ENCODE measurements at regions of chr15 and their contacts with region 1.

Region 1: GRCh38 chr15:71448688-71449114 is 333.4 kb downstream of the THSD4 start:
- DNase-seq: peak in 1 of 2 donors; percentile 10
- ATAC-seq: peak; percentile 33

Region 2: DNA sequence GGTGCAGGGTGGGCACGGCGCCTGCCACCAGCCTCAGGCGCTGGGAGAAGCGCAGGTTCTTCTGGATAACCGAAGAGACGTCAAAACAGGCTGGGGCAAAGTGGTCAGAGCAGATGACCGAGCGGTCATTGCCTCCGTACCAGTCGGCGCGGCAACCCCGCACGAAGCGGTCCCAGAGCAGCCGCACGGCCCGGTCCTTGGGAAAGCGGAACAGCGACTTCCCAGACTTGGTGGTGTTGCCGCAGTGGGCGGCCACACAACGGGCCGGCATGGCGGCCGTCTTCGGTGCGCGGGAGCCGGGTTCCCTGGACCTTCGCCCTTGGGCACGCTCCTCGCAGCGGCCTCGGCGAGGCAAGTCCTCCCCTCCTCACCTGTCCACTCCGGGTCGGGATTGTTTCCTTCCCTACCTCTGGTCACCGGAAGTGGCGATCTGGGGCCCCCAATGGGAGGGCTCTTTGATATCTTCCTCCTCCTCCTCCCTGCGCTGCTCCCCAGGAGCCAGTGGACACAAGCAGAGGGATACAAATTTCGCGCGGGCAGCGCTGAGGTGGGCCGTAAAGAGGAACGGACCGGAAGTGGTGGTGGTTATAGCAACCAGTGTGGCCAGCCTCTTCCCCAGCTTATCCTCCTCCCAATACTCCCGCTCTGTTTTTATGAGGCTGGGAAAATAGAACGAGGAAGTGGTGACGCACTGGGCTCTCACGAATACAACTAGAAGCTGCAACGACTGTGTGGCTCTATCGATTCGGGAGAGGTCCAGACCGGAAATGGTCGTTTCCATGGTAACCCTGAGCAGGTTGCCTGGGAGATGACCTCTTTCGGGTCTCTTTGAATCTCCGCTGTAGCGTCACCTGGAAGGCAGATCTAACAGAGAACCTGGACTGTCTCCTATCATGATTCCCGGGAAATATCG is 556.4 kb before region 1 on chr15 and contains the starts of genes LRRC49 and THAP10:
- intact Hi-C with region 1: loop called in 1 of 2 experiments (anchors 10 kb)
- DNase-seq: peak; percentile 87 to 88
- ATAC-seq: peak; percentile 94
- total RNA-seq, gene LRRC49: 2.8 to 3.0 TPM
- total RNA-seq, gene THAP10: 1.4 TPM

Region 3: DNA sequence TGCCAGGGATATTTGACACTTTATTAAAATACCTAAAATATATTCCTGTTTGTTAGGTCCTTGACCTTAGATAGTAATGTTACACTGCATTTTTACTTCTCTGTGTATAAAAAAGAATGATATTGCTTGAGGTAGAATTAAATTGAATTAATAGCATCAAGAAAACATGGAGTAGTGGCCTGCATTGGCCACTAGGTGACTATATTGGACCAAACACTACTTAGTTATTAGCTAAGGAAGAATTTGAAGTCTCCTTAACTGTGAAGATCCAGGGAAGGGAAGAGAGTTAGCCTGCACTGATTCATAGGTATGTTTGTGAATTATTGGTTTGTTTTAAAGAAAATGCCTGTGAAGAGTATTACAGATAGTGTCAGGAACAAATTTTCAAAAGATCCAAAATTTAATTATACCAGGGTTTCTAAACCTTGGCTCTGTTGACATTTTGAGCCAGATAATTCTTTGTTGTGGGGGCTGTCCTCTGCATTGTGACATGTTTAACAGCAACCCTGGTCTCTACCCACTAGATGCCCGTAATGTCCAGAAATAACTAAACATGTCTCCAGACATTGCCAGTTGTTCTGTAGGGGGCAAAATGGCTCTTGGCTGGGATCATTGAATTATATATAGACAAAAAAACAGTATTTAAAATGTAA is 437.1 kb before region 1 on chr15:
- intact Hi-C with region 1: loop called in 1 of 2 experiments (anchors 10 kb)
- DNase-seq: peak in 1 of 2 donors; percentile 21
- ATAC-seq: peak; percentile 81

Region 4: GRCh38 chr15:71349736-71350526 is 98.8 kb before region 1 on chr15:
- intact Hi-C with region 1: no loop called
- DNase-seq: no peak
- ATAC-seq: no peak

Region 5: GRCh38 chr15:71651750-71652186 is 203.1 kb after region 1 on chr15:
- intact Hi-C with region 1: loop called in 1 of 2 experiments (anchors 5 kb)
- DNase-seq: peak in 1 of 2 donors; percentile 29
- ATAC-seq: peak; percentile 31

Region 6: GRCh38 chr15:71728881-71729280 is 280.2 kb after region 1 on chr15:
- intact Hi-C with region 1: loop called in 1 of 2 experiments (anchors 5 kb)
- DNase-seq: no peak
- ATAC-seq: peak; percentile 50

Measured in left colon (tissue), 2 donors.